ENCODE measurements at regions of chr6 and their contacts with region 1.

Region 1: DNA sequence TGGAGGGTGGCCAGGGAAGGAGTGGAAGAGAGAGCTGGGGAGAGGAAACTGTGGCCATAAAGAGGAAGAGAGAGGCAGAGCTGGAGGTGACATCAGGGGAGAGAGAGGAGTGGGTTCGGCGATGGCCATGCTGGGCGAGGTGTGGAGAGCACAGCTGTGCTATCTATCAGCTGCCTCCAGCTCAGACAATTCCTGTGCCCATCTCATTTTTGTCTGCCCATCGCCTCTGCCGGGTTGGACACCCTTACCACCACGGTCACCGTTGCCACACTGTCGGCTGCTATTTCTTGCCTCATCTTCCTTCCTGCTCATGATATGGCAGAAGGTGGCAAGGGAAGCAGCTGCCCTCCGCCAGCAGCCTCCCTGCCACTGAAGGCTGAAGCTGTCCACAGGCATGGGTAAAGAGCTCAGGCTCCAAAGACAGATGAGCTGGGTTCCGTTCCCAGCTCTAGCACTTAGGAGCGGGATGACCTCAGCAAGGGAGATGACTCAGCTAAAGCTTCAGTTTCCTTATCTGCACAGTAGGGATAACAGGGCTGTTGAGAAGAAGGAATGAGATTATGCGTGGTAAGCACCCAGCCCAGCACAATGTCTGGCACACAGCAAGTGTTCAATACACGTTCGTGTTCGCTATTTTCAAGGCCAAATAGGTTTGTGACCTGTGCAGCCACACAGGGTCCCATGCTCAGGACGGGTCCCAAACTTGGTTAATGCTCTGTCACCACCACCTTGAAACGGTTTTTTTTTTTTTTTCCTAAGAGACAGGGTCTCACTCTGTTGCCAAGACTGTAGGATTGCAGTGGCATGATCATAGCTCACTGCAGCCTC is 21.9 kb upstream of the TAF8 start:
- DNase-seq: peak; percentile 60
- ATAC-seq: peak; percentile 48
- H3K4me3 Mint-ChIP-seq: peak overlapping the region; percentile 74
- H3K27ac Mint-ChIP-seq: peak overlapping the region; percentile 99
- H3K4me1 Mint-ChIP-seq: peaks cover 94% of the 10 kb centered on the region
- H3K27me3 Mint-ChIP-seq: no peaks in the 10 kb centered on the region

Region 2: DNA sequence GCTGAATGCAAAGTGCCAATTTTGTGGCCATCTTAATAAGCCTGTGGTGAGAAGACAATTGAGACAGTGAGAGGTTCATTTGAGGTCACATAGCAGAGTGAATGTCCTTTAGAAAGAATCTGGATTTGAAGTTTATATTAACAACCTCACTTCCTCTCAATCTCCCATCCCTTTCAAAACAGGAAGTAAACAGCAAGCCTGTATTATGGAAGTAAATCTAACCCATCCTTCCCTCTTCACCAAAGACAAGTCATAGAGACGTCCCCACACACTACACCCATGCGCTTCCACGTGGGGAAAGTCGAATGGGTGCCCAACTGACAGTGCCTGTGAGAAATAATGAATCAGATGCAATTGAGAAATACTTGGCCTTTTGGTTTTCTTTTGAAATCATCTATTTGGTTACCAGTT is 58.0 kb before region 1 on chr6:
- CTCF ChIA-PET with region 1: interaction called, 4 read pairs
- POLR2A ChIA-PET with region 1: interaction called, 6 read pairs
- intact Hi-C with region 1: loop called (anchors 2 kb)
- DNase-seq: peak; percentile 84
- ATAC-seq: peak; percentile 85
- H3K4me3 Mint-ChIP-seq: peak overlapping the region; percentile 45
- H3K27ac Mint-ChIP-seq: peak overlapping the region; percentile 93
- H3K4me1 Mint-ChIP-seq: peaks cover 89% of the 10 kb centered on the region
- H3K27me3 Mint-ChIP-seq: no peaks in the 10 kb centered on the region

Measured in activated CD4-positive, alpha-beta T cell treated with anti-CD3 and anti-CD28 coated beads for 36 hours (primary cell).